Breast epithelium (tissue), 4 donors: ENCODE measurements at regions of chr11 and their contacts with region 1.

Region 1: DNA sequence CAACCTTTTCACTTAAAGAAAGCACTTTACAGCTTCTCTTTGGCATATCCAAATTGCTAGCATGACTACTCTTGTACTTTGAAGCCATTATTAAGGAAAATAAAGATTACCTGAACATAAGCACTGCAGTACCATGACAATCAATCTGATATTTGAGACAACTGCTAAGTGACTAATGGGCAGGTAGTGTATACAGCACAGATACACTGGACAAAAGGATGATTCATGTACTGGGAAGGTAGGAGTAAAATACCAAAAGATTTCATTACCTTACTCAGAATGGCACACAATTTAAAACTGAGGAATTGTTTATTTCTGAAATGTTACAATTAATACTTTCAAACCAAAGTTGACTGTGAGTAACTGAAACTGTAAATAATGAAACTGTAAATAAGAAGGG is 1054.3 kb upstream of the TENM4 start:
- DNase-seq: no peak
- H3K4me3 ChIP-seq: no peak overlapping the region
- H3K27ac ChIP-seq: no peak overlapping the region
- H3K4me1 ChIP-seq: no peaks in the 10 kb centered on the region
- H3K27me3 ChIP-seq: no peaks in the 10 kb centered on the region
- CTCF ChIP-seq: no peak
- POLR2A ChIP-seq: no peak

Region 2: GRCh38 chr11:80519596-80520506 is 24.7 kb after region 1 on chr11:
- intact Hi-C with region 1: loop called (anchors 2 kb)
- DNase-seq: no peak
- H3K4me3 ChIP-seq: no peak overlapping the region
- H3K27ac ChIP-seq: no peak overlapping the region
- H3K4me1 ChIP-seq: no peaks in the 10 kb centered on the region
- H3K27me3 ChIP-seq: no peaks in the 10 kb centered on the region
- CTCF ChIP-seq: no peak
- POLR2A ChIP-seq: no peak

Region 3: GRCh38 chr11:80569832-80570231 is 74.7 kb after region 1 on chr11:
- intact Hi-C with region 1: no loop called
- DNase-seq: no peak
- H3K4me3 ChIP-seq: no peak overlapping the region
- H3K27ac ChIP-seq: no peak overlapping the region
- H3K4me1 ChIP-seq: no peaks in the 10 kb centered on the region
- H3K27me3 ChIP-seq: no peaks in the 10 kb centered on the region
- CTCF ChIP-seq: no peak
- POLR2A ChIP-seq: no peak